Activated CD4-positive, alpha-beta memory T cell treated with anti-CD3 and anti-CD28 coated beads for 36 hours (primary cell): ENCODE measurements at regions of chr5 and their contacts with region 1.

Region 1: GRCh38 chr5:40480392-40480791 is 199.3 kb upstream of the PTGER4 start:
- DNase-seq: peak; percentile 74
- H3K4me3 Mint-ChIP-seq: peak overlapping the region; percentile 42
- H3K27ac Mint-ChIP-seq: peak overlapping the region; percentile 85
- H3K4me1 Mint-ChIP-seq: peaks cover 53% of the 10 kb centered on the region
- H3K27me3 Mint-ChIP-seq: no peaks in the 10 kb centered on the region

Region 2: GRCh38 chr5:40124367-40124766 is 356.0 kb before region 1 on chr5:
- CTCF ChIA-PET with region 1: no interaction called
- POLR2A ChIA-PET with region 1: no interaction called
- intact Hi-C with region 1: no loop called
- DNase-seq: no peak
- H3K4me3 Mint-ChIP-seq: no peak overlapping the region
- H3K27ac Mint-ChIP-seq: no peak overlapping the region
- H3K4me1 Mint-ChIP-seq: peaks cover 14% of the 10 kb centered on the region
- H3K27me3 Mint-ChIP-seq: no peaks in the 10 kb centered on the region

Region 3: GRCh38 chr5:40437452-40437861 is 42.9 kb before region 1 on chr5:
- CTCF ChIA-PET with region 1: interaction called, 3 read pairs
- POLR2A ChIA-PET with region 1: interaction called, 6 read pairs
- intact Hi-C with region 1: loop called (anchors 1 kb)
- DNase-seq: peak; percentile 58
- H3K4me3 Mint-ChIP-seq: no peak overlapping the region
- H3K27ac Mint-ChIP-seq: peak overlapping the region; percentile 70
- H3K4me1 Mint-ChIP-seq: peaks cover 74% of the 10 kb centered on the region
- H3K27me3 Mint-ChIP-seq: no peaks in the 10 kb centered on the region

Region 4: GRCh38 chr5:40453689-40454088 is 26.7 kb before region 1 on chr5:
- CTCF ChIA-PET with region 1: no interaction called
- POLR2A ChIA-PET with region 1: no interaction called
- intact Hi-C with region 1: no loop called
- DNase-seq: no peak
- H3K4me3 Mint-ChIP-seq: no peak overlapping the region
- H3K27ac Mint-ChIP-seq: no peak overlapping the region
- H3K4me1 Mint-ChIP-seq: peaks cover 15% of the 10 kb centered on the region
- H3K27me3 Mint-ChIP-seq: no peaks in the 10 kb centered on the region

Region 5: GRCh38 chr5:40464511-40464910 is 15.9 kb before region 1 on chr5:
- CTCF ChIA-PET with region 1: interaction called, 4 read pairs
- POLR2A ChIA-PET with region 1: interaction called, 5 read pairs
- intact Hi-C with region 1: loop called (anchors 2 kb)
- DNase-seq: no peak
- H3K4me3 Mint-ChIP-seq: no peak overlapping the region
- H3K27ac Mint-ChIP-seq: no peak overlapping the region
- H3K4me1 Mint-ChIP-seq: peaks cover 22% of the 10 kb centered on the region
- H3K27me3 Mint-ChIP-seq: no peaks in the 10 kb centered on the region